ENCODE measurements at regions of chr1 and their contacts with region 1.

Region 1: DNA sequence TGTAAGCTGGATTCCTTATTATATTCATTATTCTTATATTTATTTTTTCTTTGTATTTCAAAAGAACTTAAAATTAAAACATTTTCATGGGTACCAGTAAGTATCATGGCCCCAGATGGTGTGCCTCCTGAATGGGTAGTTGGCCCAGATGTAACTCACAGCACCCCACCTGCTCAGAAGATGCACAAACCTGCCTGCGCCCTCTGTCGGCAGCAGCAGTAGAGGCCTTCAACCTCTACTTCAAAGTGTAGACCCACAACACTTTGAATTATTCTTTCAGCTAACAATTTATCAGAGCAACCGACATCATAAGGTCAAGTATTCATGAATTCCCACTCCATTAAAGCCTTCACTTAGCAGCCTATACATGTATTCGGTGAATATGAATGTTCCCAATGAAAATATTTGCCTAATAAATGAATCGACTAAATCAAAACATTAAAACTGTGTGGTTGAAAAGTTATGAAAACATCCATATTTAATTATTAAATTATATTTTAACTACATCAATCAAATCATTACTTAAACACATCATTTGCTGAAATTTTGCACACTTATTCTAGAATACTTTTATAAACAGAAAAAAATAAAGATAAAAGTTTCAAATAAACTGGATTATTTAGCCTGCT is 25.4 kb downstream of the PIGM start:
- DNase-seq: peak; percentile 83
- ATAC-seq: peak; percentile 87
- H3K4me3 Mint-ChIP-seq: no peak overlapping the region
- H3K27ac Mint-ChIP-seq: no peak overlapping the region
- H3K4me1 Mint-ChIP-seq: no peaks in the 10 kb centered on the region
- H3K27me3 Mint-ChIP-seq: peaks cover 26% of the 10 kb centered on the region

Region 2: GRCh38 chr1:159780583-159781582 is 225.5 kb before region 1 on chr1 and contains the start of gene DUSP23:
- CTCF ChIA-PET with region 1: interaction called, 10 read pairs
- DNase-seq: peak; percentile 98
- ATAC-seq: peak; percentile 99
- H3K4me3 Mint-ChIP-seq: peak within 1 kb of the TSS; percentile 72
- H3K27ac Mint-ChIP-seq: peak within 1 kb of the TSS; percentile 69
- H3K4me1 Mint-ChIP-seq: peaks cover 20% of the 10 kb centered on the region
- H3K27me3 Mint-ChIP-seq: peaks cover 3% of the 10 kb centered on the region
- total RNA-seq, gene DUSP23: 23.0 to 26.5 TPM

Region 3: DNA sequence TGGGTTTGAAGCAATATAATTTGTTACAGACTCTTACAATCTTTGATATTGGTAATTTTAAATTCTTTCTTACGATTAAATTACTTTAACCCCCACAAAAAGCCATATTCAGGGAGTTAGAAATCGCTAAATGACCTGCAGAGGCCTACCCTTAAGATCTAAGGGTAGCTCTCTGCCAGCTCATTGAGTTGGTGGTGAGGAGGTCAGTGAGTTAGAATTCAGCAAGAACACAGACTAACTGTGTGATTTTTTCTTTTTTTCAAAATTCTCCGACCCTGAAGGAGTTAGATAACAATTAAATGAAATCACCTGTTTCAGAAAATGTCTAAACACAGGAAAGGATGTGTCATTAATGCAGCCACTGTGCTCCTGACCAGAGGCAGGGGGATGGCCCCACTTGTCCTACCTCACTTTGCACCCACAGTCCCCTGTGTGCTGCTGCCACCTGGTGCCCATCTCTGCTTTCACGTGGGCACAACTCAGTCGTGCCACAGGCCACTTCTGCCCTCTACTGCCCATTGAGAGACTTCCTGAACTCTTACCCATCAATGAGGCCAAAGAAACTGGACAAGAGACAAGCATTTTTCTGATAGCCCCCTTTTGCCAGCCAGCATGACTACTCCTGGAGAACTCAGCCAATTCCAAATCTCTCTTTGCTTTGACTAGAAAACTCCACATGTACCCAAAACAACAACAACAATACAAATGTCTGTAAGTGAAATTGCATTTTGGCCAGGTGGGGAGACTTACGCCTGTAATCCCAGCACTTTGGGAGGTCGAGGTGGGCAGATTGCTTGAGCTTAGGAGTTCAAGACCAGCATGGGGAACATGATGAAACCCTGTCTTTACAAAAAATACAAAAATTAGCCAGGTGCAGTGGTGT is 114.9 kb before region 1 on chr1:
- CTCF ChIA-PET with region 1: interaction called, 125 read pairs
- DNase-seq: peak; percentile 86
- ATAC-seq: peak; percentile 96
- H3K4me3 Mint-ChIP-seq: no peak overlapping the region
- H3K27ac Mint-ChIP-seq: no peak overlapping the region
- H3K4me1 Mint-ChIP-seq: peaks cover 18% of the 10 kb centered on the region
- H3K27me3 Mint-ChIP-seq: peaks cover 4% of the 10 kb centered on the region

Region 4: GRCh38 chr1:159936273-159936904 is 70.0 kb before region 1 on chr1:
- CTCF ChIA-PET with region 1: interaction called, 228 read pairs
- DNase-seq: peak; percentile 84
- ATAC-seq: peak; percentile 80
- H3K4me3 Mint-ChIP-seq: no peak overlapping the region
- H3K27ac Mint-ChIP-seq: no peak overlapping the region
- H3K4me1 Mint-ChIP-seq: peaks cover 15% of the 10 kb centered on the region
- H3K27me3 Mint-ChIP-seq: peaks cover 18% of the 10 kb centered on the region

Region 5: GRCh38 chr1:159991513-159991912 is 14.9 kb before region 1 on chr1:
- CTCF ChIA-PET with region 1: interaction called, 17 read pairs
- DNase-seq: no peak
- ATAC-seq: peak; percentile 45
- H3K4me3 Mint-ChIP-seq: no peak overlapping the region
- H3K27ac Mint-ChIP-seq: no peak overlapping the region
- H3K4me1 Mint-ChIP-seq: peaks cover 7% of the 10 kb centered on the region
- H3K27me3 Mint-ChIP-seq: peaks cover 30% of the 10 kb centered on the region

Region 6: GRCh38 chr1:160031365-160032164 is 25.1 kb after region 1 on chr1 and contains the start of gene PIGM:
- CTCF ChIA-PET with region 1: interaction called, 32 read pairs
- DNase-seq: peak; percentile 97
- ATAC-seq: peak; percentile 99
- H3K4me3 Mint-ChIP-seq: peak within 1 kb of the TSS; percentile 87
- H3K27ac Mint-ChIP-seq: peak within 1 kb of the TSS; percentile 85
- H3K4me1 Mint-ChIP-seq: peaks cover 27% of the 10 kb centered on the region
- H3K27me3 Mint-ChIP-seq: no peaks in the 10 kb centered on the region
- total RNA-seq, gene PIGM: 5.3 to 5.9 TPM

Region 7: GRCh38 chr1:160093624-160094290 is 87.3 kb after region 1 on chr1:
- CTCF ChIA-PET with region 1: no interaction called
- DNase-seq: no peak
- ATAC-seq: no peak
- H3K4me3 Mint-ChIP-seq: no peak overlapping the region
- H3K27ac Mint-ChIP-seq: no peak overlapping the region
- H3K4me1 Mint-ChIP-seq: peaks cover 23% of the 10 kb centered on the region
- H3K27me3 Mint-ChIP-seq: no peaks in the 10 kb centered on the region

Measured in activated CD8-positive, alpha-beta memory T cell treated with anti-CD3 and anti-CD28 coated beads, Interleukin-2, amount 10 ng/mL, durations not matched to agents 7 days and 5 days (primary cell).